ENCODE measurements at regions of chr13 and their contacts with region 1.

Region 1: GRCh38 chr13:102845630-102846260 is at the start of gene ERCC5:
- DNase-seq: peak; percentile 96
- H3K4me3 ChIP-seq: peak within 1 kb of the TSS; percentile 69 to 94 (median 82)
- H3K27ac ChIP-seq: peak within 1 kb of the TSS; percentile 96 to 100 (median 100)
- H3K4me1 ChIP-seq: peaks cover 7 to 31% (median 17%) of the 10 kb centered on the region in 4 donors
- H3K27me3 ChIP-seq: no peaks in the 10 kb centered on the region
- CTCF ChIP-seq: no peak
- EP300 ChIP-seq: peak; percentile 71
- POLR2A ChIP-seq: peak; percentile 92
- total RNA-seq, gene ERCC5: 64.4 to 116 (median 84.9) TPM

Region 2: GRCh38 chr13:102580552-102581169 is 265.1 kb before region 1 on chr13:
- in situ Hi-C with region 1: loop called in 2 of 4 experiments (anchors 10 kb)
- intact Hi-C with region 1: no loop called
- DNase-seq: no peak
- H3K4me3 ChIP-seq: no peak overlapping the region
- H3K27ac ChIP-seq: no peak overlapping the region
- H3K4me1 ChIP-seq: no peaks in the 10 kb centered on the region
- H3K27me3 ChIP-seq: no peaks in the 10 kb centered on the region
- CTCF ChIP-seq: peak; percentile 66 to 74 (median 68)
- EP300 ChIP-seq: no peak
- POLR2A ChIP-seq: no peak

Region 3: DNA sequence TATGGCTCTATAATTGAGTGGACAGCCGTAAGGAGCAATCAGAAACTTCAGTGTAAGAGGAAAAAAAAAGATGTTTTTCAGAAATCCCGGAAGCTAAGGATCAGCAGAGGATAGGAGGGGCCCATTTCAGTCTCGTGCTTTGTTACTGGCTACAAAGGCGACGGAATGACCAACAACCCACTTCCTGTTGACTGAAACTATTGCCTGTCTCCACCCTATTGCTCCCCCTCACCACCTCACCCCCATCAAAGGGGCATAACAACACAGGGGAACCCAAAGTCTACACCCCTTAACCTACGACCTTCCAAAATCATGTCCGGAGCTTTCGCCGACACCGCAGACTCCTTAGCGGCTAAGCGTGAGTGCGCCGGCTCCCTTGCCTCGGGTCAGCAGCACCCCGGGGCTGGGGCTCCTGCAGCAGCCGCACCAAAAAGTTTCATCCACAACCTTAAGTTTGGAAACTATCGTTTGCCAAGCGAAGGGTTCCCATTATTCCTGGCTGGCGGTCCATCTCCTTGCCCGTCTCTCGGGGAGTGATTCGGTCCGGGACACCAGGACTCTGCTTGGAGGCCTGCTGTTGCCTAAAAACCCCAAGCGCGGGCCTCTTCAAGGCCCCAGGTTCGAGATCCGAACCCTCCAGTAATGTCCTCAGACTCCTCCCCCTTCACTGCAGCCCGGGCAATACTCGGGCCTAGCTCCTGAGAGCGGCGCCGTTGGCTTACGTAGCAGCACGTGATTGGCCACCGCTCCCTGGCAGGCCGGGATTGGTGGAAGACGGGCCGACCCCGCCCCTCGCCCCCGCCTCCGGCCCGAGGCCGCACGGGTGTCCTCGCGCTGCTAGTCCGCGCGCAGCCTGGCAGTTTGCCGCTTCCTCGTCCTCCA is 249.4 kb before region 1 on chr13 and contains the start of gene TPP2:
- in situ Hi-C with region 1: loop called in 3 of 4 experiments (anchors 5 kb)
- intact Hi-C with region 1: loop called (anchors 5 kb)
- DNase-seq: peak; percentile 100
- H3K4me3 ChIP-seq: peak within 1 kb of the TSS; percentile 73 to 98 (median 88)
- H3K27ac ChIP-seq: peak within 1 kb of the TSS; percentile 96 to 99 (median 98)
- H3K4me1 ChIP-seq: peaks cover 0 to 60% (median 40%) of the 10 kb centered on the region in 4 donors
- H3K27me3 ChIP-seq: no peaks in the 10 kb centered on the region
- CTCF ChIP-seq: no peak
- EP300 ChIP-seq: no peak
- POLR2A ChIP-seq: peak; percentile 91
- total RNA-seq, gene TPP2: 19.1 to 47.8 (median 30.3) TPM

Region 4: DNA sequence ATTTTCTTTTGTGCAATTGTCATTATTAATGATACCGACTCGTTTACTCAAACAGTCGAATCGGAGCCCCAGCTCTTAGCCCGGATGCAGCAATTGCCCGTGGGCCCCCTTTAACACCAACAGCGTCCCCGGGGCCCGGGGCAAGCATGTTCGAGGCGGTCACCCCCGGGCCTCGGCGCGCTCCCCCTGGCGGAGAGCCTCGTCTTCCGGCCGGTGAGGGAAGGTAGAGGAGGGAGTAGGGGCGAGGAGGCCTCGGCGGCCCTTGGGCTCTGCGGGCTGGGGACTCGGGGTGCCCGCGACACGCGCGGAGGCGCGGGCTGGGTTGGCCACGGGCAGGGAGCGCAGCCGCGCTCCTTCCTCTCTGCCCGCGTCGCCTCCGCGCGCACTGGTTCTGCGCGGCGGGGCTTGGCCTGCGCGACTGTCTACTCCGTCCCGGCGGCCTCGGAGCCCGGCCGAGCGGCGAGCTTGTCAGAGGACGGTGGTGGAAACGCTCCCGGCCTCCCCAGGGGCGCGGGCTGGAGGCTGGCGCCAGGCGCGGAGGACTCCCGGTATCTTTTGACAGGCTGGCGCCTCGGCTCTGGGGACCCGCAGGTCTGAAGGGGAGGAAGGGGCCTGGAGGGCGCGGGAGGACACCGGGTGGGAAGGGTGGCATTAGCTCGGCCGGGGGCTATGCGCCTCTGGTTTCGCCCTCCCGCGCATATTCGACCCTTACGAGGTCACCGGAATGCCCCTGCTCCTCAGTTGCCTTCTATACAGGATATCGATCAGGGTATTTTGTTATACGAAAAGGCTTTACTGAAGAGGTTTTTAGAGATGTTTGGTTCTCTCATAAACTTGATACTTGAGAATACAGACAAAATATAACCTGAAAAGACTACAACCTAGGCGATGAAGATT is 45.4 kb before region 1 on chr13:
- in situ Hi-C with region 1: no loop called
- intact Hi-C with region 1: loop called (anchors 5 kb)
- DNase-seq: peak; percentile 87
- H3K4me3 ChIP-seq: peak overlapping the region; percentile 60 to 79 (median 64)
- H3K27ac ChIP-seq: peak overlapping the region; percentile 83 to 90 (median 84)
- H3K4me1 ChIP-seq: peaks cover 0 to 28% (median 2%) of the 10 kb centered on the region in 4 donors
- H3K27me3 ChIP-seq: no peaks in the 10 kb centered on the region
- CTCF ChIP-seq: peak; percentile 76 to 82 (median 78)
- EP300 ChIP-seq: no peak
- POLR2A ChIP-seq: peak; percentile 32

Region 5: DNA sequence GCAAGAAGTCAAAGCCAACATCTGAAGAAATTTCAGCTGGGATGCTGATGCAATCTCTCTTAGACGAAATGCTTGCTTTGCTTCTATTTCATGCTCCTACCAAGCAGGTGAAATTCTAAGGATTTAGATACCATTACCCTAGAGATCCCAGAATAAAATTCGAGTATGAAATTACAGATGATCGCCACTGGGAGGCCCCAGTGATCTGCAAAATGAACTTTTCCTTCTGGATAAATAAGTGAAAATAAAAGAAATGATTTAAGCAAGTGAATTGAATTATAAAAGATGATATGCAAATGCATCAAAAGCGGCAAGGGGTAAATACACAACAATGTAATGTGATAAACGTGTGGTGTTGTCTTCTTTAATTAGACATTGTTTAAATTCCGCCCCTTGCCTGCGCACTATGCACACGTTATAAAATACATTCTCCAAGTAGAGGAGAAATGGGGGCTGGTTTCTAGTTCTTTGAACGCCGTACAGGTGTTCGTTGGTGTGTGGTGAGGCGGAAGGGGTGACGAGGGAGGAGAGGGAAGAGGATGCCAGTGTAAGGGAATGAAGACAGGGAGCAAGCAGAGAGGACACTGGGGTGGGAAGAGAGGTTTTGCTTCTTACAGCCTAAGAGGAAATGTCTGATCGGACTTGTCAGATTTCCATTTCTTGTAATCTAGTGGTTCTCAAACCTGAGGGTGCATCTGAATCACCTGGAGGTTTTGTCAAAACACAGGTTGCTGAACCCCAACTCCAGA is 58.1 kb after region 1 on chr13:
- in situ Hi-C with region 1: no loop called
- intact Hi-C with region 1: no loop called
- DNase-seq: no peak
- H3K4me3 ChIP-seq: no peak overlapping the region
- H3K27ac ChIP-seq: no peak overlapping the region
- H3K4me1 ChIP-seq: peaks cover 0 to 20% (median 7%) of the 10 kb centered on the region in 4 donors
- H3K27me3 ChIP-seq: no peaks in the 10 kb centered on the region
- CTCF ChIP-seq: peak; percentile 31 to 42 (median 41)
- EP300 ChIP-seq: no peak
- POLR2A ChIP-seq: no peak

Region 6: DNA sequence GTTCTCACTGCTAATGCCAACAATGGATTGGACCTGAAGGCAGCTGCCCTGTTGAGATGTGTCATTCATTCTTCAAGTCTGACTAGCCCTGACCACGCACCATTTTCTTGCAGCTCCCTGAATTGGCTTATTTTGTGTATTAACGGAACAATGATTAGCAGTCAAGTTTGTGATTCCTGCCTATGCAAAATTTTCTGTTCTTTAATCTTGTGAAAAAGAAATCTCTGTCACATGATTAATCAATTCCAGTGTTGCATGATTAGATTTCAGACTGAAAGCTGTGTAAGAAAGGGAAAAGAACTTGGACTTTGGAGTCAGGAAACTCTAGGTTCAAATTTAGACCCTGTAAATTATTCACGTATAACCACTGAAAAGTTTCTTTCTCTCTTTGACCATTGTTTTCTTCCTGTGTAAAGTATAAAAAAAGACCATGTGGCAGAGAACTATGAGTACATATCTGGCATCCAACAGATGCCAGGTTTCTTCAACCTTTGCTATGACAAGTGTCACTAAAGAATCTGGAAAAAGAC is 285.0 kb after region 1 on chr13:
- in situ Hi-C with region 1: no loop called
- intact Hi-C with region 1: no loop called
- DNase-seq: no peak
- H3K4me3 ChIP-seq: no peak overlapping the region
- H3K27ac ChIP-seq: no peak overlapping the region
- H3K4me1 ChIP-seq: peaks cover 0 to 3% (median 0%) of the 10 kb centered on the region in 4 donors
- H3K27me3 ChIP-seq: no peaks in the 10 kb centered on the region
- CTCF ChIP-seq: no peak
- EP300 ChIP-seq: no peak
- POLR2A ChIP-seq: no peak

Measured in transverse colon (tissue), 4 donors.